ENCODE measurements at regions of chr18 and their contacts with region 1.

Region 1: DNA sequence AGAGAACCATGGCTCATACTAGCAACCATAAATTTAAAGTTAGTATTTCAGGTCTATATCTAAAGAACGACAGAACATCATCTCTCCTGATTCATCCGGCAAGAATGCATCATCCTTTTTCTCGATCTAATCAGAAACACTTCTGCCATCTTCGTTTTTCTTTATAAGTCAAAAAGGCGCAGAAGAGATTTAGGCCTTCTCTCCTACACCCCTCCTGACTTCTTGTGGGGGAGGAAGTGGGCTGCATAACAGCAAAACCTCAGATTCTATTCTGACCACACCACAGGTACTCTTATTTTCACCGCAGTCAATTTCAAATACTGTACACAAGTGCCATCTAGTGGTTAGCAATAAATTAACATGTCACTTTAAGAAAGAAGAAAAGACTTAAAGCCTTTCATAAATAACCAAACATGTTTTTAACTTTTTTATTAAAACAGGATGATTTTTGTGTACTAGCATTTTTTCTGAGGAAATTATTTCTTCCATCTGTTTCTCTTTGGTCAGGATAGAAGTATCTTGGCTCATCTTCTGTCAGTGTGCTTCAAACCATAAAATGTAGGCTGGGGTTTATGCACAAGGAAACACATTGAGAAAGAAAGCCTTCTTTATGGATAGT is 48.4 kb upstream of the PIK3C3 start:
- DNase-seq: peak; percentile 69
- ATAC-seq: peak; percentile 75
- H3K4me3 ChIP-seq: peak overlapping the region; percentile 30; the same call in 1 of the 2 replicates
- H3K27ac ChIP-seq: no peak overlapping the region
- H3K4me1 ChIP-seq: no peaks in the 10 kb centered on the region
- H3K27me3 ChIP-seq: no peaks in the 10 kb centered on the region
- CTCF ChIP-seq: peak; percentile 63
- POLR2A ChIP-seq: no peak
- RAD21 ChIP-seq: peak; percentile 78

Region 2: DNA sequence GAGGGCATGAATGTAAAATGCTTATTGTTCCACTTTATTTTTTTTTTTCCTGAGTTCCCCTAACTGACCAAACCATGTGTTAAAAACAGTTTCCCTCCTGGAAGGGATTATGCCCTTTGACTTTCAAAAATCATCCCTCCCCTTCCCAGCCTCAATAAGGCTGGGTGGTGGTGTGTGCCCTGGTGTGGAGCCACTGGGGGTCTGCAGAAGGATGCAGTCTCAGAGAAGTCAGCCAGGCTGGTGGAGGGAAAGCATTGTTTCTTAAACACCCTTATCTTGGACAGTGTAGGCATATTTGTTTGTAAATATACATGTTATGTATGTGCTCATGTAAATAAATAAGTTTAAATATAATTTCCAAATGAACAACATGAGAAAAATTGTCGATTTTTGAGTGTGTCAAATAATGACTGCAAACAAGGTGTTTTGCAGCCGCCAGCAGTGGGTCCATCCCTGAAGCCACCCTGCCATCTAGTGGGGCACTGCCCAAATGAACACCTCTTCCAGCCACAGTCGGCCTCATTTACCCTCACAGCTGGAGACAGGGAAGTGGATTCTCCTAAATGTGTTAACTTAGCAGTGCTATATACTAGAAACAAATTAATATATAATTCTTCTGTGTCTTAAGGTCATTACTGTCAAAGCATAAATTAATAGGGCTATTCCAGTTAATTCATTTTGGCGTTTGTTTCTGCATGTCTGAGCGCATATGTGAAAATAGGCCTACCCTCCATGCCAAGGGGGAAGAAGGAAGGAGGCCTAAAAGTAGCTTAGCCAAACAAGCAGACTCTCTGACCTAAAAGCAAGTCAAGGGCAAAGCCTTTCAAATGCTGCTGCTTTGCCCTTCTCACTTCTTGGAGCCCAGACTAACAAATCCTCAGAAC is 161.2 kb before region 1 on chr18:
- CTCF ChIA-PET with region 1: no interaction called
- POLR2A ChIA-PET with region 1: no interaction called
- dilution Hi-C with region 1: no loop called
- in situ Hi-C with region 1: no loop called
- intact Hi-C with region 1: loop called (anchors 1 kb)
- DNase-seq: peak; percentile 6
- ATAC-seq: peak; percentile 81
- H3K4me3 ChIP-seq: no peak overlapping the region
- H3K27ac ChIP-seq: no peak overlapping the region
- H3K4me1 ChIP-seq: no peaks in the 10 kb centered on the region
- H3K27me3 ChIP-seq: no peaks in the 10 kb centered on the region
- CTCF ChIP-seq: peak; percentile 51
- POLR2A ChIP-seq: no peak
- RAD21 ChIP-seq: peak; percentile 77

Region 3: GRCh38 chr18:42950732-42951131 is 1044.1 kb after region 1 on chr18:
- CTCF ChIA-PET with region 1: no interaction called
- POLR2A ChIA-PET with region 1: no interaction called
- dilution Hi-C with region 1: no loop called
- in situ Hi-C with region 1: no loop called
- intact Hi-C with region 1: no loop called
- DNase-seq: no peak
- ATAC-seq: no peak
- H3K4me3 ChIP-seq: no peak overlapping the region
- H3K27ac ChIP-seq: no peak overlapping the region
- H3K4me1 ChIP-seq: no peaks in the 10 kb centered on the region
- H3K27me3 ChIP-seq: no peaks in the 10 kb centered on the region
- CTCF ChIP-seq: no peak
- POLR2A ChIP-seq: no peak
- RAD21 ChIP-seq: no peak